Activated CD4-positive, alpha-beta memory T cell treated with anti-CD3 and anti-CD28 coated beads, Interleukin-2, amount 10 ng/mL, durations not matched to agents 7 days and 5 days (primary cell): ENCODE measurements at regions of chr20 and their contacts with region 1.

Region 1: DNA sequence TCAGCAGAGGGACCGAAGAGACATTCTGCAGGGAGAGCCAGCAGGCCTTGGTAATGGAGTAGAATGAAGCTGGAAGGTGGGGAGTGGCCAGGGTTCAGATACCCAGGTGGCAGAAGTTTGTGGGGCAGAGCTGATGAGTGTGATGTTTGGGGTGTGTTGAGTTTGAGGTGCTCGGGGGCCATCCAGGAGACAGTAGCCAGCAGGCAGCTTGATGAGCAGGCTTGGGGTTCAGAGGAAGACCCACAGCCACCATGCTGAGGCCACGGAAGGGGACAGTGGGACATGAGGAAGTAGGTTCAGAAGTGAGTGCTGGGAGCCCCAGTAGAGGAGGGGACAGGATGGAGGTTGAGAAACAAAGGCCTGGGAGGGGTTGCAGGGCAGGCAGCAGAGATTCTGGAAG is 11.1 kb upstream of the FOXS1 start:
- DNase-seq: no peak
- H3K4me3 Mint-ChIP-seq: no peak overlapping the region
- H3K27ac Mint-ChIP-seq: no peak overlapping the region
- H3K4me1 Mint-ChIP-seq: peaks cover 7% of the 10 kb centered on the region
- H3K27me3 Mint-ChIP-seq: peaks cover 31% of the 10 kb centered on the region

Region 2: DNA sequence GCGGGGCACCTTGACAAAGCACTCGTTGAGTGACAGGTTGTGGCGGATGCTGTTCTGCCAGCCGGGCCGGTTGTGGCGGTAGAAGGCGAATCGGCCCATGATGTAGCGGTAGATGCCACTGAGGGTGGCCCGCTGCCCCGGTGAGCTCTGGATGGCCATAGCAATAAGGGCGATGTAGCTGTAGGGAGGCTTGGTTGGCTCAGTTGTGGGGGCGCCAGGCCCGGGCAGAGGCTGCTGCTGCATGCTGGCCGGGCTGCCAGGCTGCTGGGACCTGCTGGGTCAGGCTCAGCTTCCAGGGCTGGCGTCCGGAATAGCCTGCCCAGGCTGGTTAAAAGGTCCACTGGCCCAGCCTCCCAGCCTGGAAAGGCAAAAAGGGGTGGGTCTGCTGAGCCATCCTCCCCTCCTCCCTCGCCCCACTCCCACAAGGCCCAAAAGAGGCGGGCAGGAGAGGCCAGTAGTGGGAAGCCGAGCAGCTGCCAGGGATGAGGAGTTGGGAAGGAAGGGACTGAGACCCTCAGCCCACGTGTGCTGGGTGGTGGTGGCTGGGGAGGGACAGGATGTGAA is 11.1 kb before region 1 on chr20 and contains the start of gene FOXS1:
- CTCF ChIA-PET with region 1: interaction called, 12 read pairs
- POLR2A ChIA-PET with region 1: no interaction called
- DNase-seq: no peak
- H3K4me3 Mint-ChIP-seq: no peak within 1 kb of the TSS
- H3K27ac Mint-ChIP-seq: no peak within 1 kb of the TSS
- H3K4me1 Mint-ChIP-seq: peaks cover 2% of the 10 kb centered on the region
- H3K27me3 Mint-ChIP-seq: peaks cover 15% of the 10 kb centered on the region
- total RNA-seq, gene FOXS1: not detected

Region 3: DNA sequence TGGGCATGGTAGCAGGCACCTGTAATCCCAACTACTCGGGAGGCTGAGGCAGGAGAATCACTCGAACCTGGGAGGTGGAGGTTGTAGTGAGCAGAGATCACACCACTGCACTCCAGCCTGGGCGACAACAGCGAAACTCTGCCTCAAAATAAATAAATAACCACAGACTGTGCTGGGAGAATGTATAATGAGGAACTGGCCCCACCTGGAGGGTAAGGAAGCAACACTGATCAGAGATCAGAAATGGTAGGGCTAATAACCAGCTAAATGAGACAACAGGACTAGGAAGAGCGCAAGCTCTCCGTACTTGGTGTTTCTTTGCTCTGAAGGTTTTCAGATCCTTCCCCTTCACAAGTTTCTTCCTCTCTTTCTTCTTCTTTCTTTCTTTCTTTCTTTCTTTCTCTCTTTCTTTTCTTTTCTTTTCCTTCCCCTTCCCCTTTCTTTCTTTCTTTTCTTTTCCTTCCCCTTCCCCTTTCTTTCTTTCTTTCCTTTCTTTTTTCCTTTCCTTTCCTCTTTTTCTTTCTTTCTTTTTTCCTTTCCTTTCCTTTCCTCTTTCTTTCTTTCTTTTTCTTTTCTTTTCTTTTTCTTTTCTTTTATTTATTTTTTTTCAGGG is 168.3 kb after region 1 on chr20:
- CTCF ChIA-PET with region 1: no interaction called
- POLR2A ChIA-PET with region 1: no interaction called
- DNase-seq: no peak
- H3K4me3 Mint-ChIP-seq: no peak overlapping the region
- H3K27ac Mint-ChIP-seq: no peak overlapping the region
- H3K4me1 Mint-ChIP-seq: peaks cover 8% of the 10 kb centered on the region
- H3K27me3 Mint-ChIP-seq: peaks cover 48% of the 10 kb centered on the region

Region 4: DNA sequence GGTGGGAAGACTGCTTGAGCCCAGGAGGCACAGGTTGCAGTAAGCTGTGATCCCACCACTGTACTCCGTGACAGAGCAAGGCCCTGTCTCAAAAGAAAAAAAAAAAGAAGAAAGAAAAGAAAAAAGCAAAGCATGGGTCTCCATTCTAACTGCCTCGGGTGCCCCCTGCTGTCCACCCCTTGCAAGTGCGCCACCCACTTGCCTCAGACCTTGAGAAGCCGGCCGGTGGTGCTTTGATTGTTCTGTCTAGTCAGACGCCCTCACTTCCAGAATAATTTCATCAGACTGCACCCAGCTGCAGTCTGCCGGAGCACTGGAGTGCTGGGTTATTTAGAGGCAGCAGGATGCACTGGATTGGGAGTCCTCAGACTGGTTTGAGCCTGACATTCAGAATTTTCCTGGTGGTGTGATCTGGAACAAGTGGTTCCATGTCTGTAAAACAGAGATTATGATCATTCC is 235.4 kb after region 1 on chr20:
- CTCF ChIA-PET with region 1: interaction called, 10 read pairs
- POLR2A ChIA-PET with region 1: no interaction called
- DNase-seq: peak; percentile 80
- H3K4me3 Mint-ChIP-seq: no peak overlapping the region
- H3K27ac Mint-ChIP-seq: no peak overlapping the region
- H3K4me1 Mint-ChIP-seq: no peaks in the 10 kb centered on the region
- H3K27me3 Mint-ChIP-seq: peaks cover 15% of the 10 kb centered on the region